Head of caudate nucleus (tissue), 42 donors: ENCODE measurements at regions of chr17 and their contacts with region 1.

Region 1: DNA sequence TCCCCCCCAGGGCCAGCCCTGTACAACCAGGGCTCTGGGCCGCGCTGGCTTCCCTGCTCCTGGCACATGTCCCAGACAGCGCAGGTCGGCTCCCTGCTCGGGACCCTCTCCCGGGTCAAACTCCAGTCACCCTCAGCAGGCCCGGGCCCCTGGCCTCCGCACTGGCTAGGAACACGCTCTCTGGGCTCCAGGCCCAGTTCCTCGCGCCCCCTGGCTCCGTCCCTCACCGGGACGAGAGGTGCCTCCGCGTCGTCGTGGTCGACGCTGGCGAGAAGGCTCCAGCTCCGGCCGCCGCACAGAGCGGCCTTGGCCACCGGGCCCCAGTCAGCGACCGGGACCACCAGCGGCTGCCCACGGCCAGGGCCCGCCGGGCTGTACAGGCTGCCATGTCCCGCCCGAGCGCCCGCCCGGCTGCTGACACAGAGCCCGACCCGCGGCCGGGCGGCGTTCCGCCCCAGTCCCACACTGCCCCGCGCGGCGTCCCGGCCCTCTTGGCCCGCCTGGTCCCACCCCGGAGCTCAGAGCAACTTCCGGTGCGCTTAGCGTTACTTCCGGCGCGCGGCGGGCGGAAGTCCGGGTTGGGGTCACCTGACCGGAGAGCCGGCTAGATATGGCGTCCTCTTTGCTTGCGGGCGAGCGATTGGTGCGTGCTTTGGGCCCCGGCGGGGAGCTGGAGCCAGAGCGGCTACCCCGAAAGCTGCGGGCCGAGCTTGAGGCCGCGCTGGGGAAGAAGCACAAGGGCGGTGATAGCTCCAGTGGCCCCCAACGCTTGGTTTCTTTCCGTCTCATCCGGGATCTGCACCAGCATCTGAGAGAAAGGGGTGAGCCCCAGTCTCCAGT is at the start of gene POLDIP2:
- DNase-seq: peak; percentile 88 to 99 (median 96)

Region 2: DNA sequence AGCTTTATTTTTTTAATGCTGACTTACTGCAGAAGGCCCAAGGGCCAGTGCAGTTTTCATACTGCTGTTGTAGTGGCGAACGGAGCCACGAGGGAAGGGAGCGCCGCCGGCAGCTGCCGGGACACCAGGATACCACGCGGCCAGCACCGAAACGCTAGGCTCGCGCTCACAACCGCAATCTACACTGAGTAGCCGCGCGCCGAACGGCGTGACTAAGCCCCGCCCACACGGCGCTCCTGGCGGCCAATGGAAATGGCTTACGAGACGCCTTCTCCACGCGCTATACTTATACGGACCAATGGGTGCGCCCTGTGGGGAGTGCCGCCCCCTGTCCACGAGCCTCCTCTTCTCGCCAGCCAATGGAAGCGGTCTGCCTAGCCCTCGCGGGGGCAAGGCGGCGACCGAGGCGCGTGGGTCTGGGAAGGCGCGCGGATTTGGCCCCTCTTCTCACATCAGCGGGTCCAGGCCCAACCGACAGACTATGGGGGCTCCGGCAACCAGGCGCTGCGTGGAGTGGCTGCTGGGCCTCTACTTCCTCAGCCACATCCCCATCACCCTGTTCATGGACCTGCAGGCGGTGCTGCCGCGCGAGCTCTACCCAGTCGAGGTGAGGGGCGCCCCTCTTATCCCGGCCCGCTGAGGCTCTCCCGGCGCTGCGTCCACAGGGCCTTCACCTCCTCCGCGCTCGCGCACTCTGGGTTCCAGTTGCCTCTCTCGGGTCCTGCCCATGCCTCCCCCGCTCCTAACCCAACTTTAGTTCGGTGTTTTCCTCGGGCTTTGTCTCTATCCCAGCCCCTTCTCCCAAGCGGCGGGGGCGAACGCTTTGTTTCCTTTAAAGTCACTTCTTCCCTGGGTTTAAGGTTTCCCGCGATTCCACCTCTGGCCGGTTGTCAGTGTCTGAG is 38.3 kb before region 1 on chr17 and contains the start of gene TMEM97:
- intact Hi-C with region 1: loop called (anchors 2 kb)
- DNase-seq: peak; percentile 95 to 99 (median 98)

Region 3: GRCh38 chr17:28335201-28335955 is 21.9 kb before region 1 on chr17 and contains the starts of genes IFT20 and TNFAIP1:
- intact Hi-C with region 1: loop called (anchors 1 kb)
- DNase-seq: peak; percentile 97 to 100 (median 99)

Region 4: GRCh38 chr17:28346746-28347246 is 10.5 kb before region 1 on chr17:
- intact Hi-C with region 1: no loop called
- DNase-seq: no peak

Region 5: GRCh38 chr17:28467456-28468025 is 110.3 kb after region 1 on chr17:
- intact Hi-C with region 1: no loop called
- DNase-seq: peak in 4 of 42 donors; percentile 9 to 28 (median 21)